ENCODE measurements at regions of chr1 and their contacts with region 1.

Region 1: GRCh38 chr1:224497714-224498573 is 63.3 kb upstream of the WDR26 start:
- DNase-seq: peak; percentile 87
- H3K4me3 Mint-ChIP-seq: peak overlapping the region; percentile 66
- H3K27ac Mint-ChIP-seq: peak overlapping the region; percentile 87
- H3K4me1 Mint-ChIP-seq: peaks cover 33% of the 10 kb centered on the region
- H3K27me3 Mint-ChIP-seq: no peaks in the 10 kb centered on the region

Region 2: GRCh38 chr1:224168859-224169380 is 329.0 kb before region 1 on chr1:
- CTCF ChIA-PET with region 1: no interaction called
- POLR2A ChIA-PET with region 1: no interaction called
- intact Hi-C with region 1: loop called (anchors 1 kb)
- DNase-seq: peak; percentile 22
- H3K4me3 Mint-ChIP-seq: peak overlapping the region; percentile 17
- H3K27ac Mint-ChIP-seq: peak overlapping the region; percentile 50
- H3K4me1 Mint-ChIP-seq: peaks cover 30% of the 10 kb centered on the region
- H3K27me3 Mint-ChIP-seq: no peaks in the 10 kb centered on the region

Region 3: GRCh38 chr1:224223819-224224714 is 273.9 kb before region 1 on chr1:
- CTCF ChIA-PET with region 1: no interaction called
- POLR2A ChIA-PET with region 1: no interaction called
- intact Hi-C with region 1: no loop called
- DNase-seq: no peak
- H3K4me3 Mint-ChIP-seq: no peak overlapping the region
- H3K27ac Mint-ChIP-seq: no peak overlapping the region
- H3K4me1 Mint-ChIP-seq: no peaks in the 10 kb centered on the region
- H3K27me3 Mint-ChIP-seq: no peaks in the 10 kb centered on the region

Region 4: GRCh38 chr1:224377676-224378006 is 120.3 kb before region 1 on chr1:
- CTCF ChIA-PET with region 1: no interaction called
- POLR2A ChIA-PET with region 1: no interaction called
- intact Hi-C with region 1: loop called (anchors 5 kb)
- DNase-seq: peak; percentile 67
- H3K4me3 Mint-ChIP-seq: no peak overlapping the region
- H3K27ac Mint-ChIP-seq: peak overlapping the region; percentile 46
- H3K4me1 Mint-ChIP-seq: peaks cover 91% of the 10 kb centered on the region
- H3K27me3 Mint-ChIP-seq: no peaks in the 10 kb centered on the region

Region 5: GRCh38 chr1:224542783-224543440 is 45.0 kb after region 1 on chr1:
- CTCF ChIA-PET with region 1: interaction called, 3 read pairs
- POLR2A ChIA-PET with region 1: interaction called, 4 read pairs
- intact Hi-C with region 1: loop called (anchors 1 kb)
- DNase-seq: peak; percentile 47
- H3K4me3 Mint-ChIP-seq: no peak overlapping the region
- H3K27ac Mint-ChIP-seq: peak overlapping the region; percentile 23
- H3K4me1 Mint-ChIP-seq: peaks cover 18% of the 10 kb centered on the region
- H3K27me3 Mint-ChIP-seq: no peaks in the 10 kb centered on the region

Region 6: DNA sequence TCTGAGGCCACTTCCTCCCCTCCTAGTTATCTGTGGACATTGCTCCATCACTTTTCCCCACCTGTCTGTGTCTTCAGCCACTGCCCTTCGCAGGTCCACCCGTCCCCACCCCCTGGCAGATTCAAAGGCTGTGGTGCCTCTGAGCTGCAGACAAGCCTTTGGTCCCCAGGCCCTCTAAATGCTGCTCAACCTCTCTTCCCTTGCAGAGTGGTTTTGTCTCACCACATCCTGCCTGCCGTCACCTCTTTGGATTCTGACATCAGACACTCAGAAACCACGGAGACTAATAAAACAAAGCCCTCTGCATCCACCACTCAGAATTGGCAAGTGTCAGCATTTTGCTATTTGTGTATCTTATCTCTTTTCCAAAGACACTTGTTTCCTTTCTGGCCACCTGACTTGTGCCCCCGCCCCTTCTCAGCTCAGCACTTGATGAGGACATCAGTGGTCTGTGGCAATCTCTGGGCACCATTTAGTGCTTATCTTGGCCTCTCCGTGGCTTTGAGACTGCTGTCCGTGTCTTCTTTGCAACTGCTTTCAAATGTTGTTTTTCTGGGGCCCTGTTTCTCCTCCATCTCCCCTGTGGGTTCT is 125.9 kb after region 1 on chr1:
- CTCF ChIA-PET with region 1: no interaction called
- POLR2A ChIA-PET with region 1: interaction called, 5 read pairs
- intact Hi-C with region 1: loop called (anchors 1 kb)
- DNase-seq: peak; percentile 90
- H3K4me3 Mint-ChIP-seq: peak overlapping the region; percentile 45
- H3K27ac Mint-ChIP-seq: peak overlapping the region; percentile 87
- H3K4me1 Mint-ChIP-seq: peaks cover 34% of the 10 kb centered on the region
- H3K27me3 Mint-ChIP-seq: peaks cover 28% of the 10 kb centered on the region

Region 7: GRCh38 chr1:224644553-224645154 is 146.7 kb after region 1 on chr1:
- CTCF ChIA-PET with region 1: no interaction called
- POLR2A ChIA-PET with region 1: no interaction called
- intact Hi-C with region 1: no loop called
- DNase-seq: peak; percentile 66
- H3K4me3 Mint-ChIP-seq: no peak overlapping the region
- H3K27ac Mint-ChIP-seq: no peak overlapping the region
- H3K4me1 Mint-ChIP-seq: no peaks in the 10 kb centered on the region
- H3K27me3 Mint-ChIP-seq: no peaks in the 10 kb centered on the region